Calu3 (cell line): ENCODE measurements at regions of chr1 and their contacts with region 1.

Region 1: GRCh38 chr1:186014370-186015030 is 280.3 kb downstream of the HMCN1 start:
- DNase-seq: no peak
- H3K4me3 Mint-ChIP-seq: no peak overlapping the region
- H3K27ac Mint-ChIP-seq: no peak overlapping the region
- H3K4me1 Mint-ChIP-seq: peaks cover 7% of the 10 kb centered on the region
- H3K27me3 Mint-ChIP-seq: no peaks in the 10 kb centered on the region
- CTCF ChIP-seq: no peak

Region 2: DNA sequence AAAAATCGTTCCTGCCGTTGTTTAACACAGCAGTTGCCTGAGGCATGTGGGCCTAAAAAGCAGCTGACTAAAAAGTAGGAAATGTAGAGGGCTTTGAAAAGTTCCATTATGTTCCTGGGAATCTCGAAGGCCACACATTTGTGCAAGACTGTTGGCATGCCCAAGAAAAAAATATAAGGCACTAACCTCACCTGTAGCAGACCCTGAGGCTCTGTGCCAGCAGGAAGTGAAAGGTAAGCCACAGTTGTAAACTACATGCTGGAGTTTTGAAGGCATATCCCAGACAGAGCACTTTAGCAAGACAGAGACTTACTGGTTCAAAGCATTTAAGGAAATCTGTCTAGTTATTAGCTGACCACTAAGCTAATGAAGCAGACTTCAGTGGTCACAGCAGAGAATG is 910.4 kb before region 1 on chr1:
- CTCF ChIA-PET with region 1: no interaction called
- intact Hi-C with region 1: loop called (anchors 5 kb)
- DNase-seq: no peak
- H3K4me3 Mint-ChIP-seq: no peak overlapping the region
- H3K27ac Mint-ChIP-seq: no peak overlapping the region
- H3K4me1 Mint-ChIP-seq: no peaks in the 10 kb centered on the region
- H3K27me3 Mint-ChIP-seq: no peaks in the 10 kb centered on the region
- CTCF ChIP-seq: no peak

Region 3: DNA sequence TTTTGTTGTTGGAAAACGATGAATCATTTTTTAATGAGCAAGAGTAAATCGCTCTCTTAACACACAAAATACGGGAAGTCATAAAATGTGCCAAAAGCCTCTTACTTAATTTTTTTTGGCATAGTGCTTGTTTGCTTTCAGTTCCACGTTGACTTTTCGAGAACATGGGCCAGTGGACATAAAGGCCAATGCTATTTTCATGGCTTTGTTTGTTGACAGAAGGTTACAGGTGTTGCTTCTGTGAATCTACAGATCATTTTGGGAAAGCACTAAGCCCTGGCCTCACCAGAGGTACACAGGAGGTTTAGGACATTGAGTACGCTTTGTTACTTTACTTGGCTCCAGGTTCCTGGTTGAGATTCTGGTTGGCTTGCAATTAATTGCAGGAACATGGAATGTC is 479.7 kb before region 1 on chr1:
- CTCF ChIA-PET with region 1: no interaction called
- intact Hi-C with region 1: no loop called
- DNase-seq: no peak
- H3K4me3 Mint-ChIP-seq: no peak overlapping the region
- H3K27ac Mint-ChIP-seq: no peak overlapping the region
- H3K4me1 Mint-ChIP-seq: no peaks in the 10 kb centered on the region
- H3K27me3 Mint-ChIP-seq: no peaks in the 10 kb centered on the region
- CTCF ChIP-seq: no peak